Posterior cingulate gyrus (tissue), 11 donors: ENCODE measurements at regions of chr1 and their contacts with region 1.

Region 1: GRCh38 chr1:45011837-45012638 is at the start of gene UROD:
- DNase-seq: peak; percentile 87 to 99 (median 89)

Region 2: DNA sequence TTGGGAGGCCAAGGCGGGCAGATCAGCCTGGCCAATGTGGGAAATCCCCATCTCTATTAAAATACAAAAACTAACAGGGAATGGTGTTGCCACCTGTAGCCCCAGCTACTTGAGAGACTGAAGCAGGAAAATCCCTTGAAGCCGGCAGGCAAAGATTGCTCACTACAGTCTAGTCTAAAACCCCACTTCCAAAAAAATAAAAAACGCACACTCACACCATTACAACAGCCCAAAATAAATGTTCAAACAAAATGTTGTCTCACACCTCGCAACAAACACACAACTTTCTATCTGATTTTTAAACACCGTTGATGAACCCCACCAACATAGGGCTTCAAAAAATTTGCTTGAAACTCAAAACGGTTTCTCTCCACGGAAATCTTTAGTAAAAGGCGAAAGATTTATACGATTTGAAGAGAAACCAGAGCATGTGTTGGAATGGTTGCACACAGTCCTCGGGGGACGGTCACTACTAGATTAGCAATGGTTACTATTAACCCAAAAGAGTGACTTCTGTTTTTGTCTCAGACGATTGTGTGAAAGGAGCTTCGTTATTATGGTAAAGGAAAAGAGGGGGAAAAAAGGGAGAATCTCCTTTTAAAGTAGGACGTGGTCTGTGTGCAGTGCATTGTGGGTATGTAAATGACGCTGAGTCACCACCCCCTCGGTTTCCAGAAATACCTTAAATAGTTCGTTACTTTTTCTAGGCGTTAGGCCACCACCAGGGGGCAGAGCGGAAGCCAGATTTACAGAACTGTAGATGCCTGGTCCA is 281.1 kb before region 1 on chr1 and contains the start of gene RNU5D-1:
- intact Hi-C with region 1: loop called (anchors 5 kb)
- DNase-seq: peak; percentile 84 to 98 (median 94)

Region 3: GRCh38 chr1:44835738-44836675 is 176.0 kb before region 1 on chr1:
- intact Hi-C with region 1: loop called (anchors 5 kb)
- DNase-seq: peak; percentile 64 to 97 (median 86)

Region 4: DNA sequence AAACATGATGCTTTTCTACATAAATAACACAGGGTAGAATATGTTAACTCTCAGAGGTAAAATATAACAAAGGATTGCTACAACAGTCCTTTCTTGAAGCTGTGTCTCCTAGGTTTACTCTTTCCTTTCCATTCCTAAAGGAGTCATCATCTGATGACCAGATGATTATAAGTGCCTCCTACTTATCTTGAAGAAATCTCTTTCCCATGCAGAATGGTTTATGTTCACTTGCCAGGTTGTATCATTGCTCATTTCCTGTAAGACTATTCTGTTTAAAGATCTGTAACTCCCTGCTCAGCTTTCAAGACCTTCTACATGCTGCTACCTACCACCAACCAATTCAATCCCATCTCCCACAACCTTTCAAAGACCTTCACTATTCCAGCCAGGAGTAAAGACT is 117.4 kb before region 1 on chr1:
- intact Hi-C with region 1: no loop called
- DNase-seq: no peak

Region 5: DNA sequence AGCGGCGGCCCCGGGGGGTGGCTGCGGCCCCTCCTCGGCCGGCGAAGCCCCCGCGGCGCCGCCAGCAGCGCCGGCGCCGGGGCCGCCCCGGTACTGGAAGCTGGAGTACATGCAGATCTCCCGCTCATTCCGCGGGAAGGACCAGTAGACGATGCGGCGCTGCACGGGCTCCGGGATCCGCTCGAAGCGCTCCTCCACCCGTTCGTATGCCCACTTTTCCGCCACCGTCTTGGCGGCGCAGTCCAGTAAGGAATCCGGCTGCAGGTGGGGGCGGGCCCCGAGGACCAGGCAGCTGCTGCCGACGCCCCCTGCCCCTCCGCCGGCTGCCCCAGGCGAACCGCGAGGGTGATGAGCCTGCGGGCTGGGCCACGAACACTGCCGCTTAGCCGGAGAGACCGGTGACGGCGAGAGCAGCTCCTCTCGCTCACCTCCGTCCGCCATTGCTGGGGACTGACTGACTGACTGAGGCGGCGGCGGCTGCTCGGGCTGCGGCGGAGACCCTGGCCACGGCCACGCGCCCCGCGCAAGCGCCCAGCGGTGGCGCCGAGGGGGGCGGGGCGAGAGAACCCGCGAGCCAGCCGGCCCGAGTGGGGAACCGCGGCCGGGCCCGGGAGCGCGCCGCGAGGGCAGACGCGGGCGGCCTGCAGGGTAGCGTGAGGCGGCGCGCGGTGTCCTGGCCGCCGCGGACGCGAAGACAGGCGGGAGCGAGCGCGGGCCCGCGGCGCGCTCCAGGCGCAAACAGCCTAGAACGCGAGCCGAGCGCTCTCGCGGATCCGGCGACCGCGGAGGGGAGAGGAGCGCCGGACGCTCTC is 194.1 kb after region 1 on chr1 and contains the start of gene ZSWIM5:
- intact Hi-C with region 1: loop called (anchors 2 kb)
- DNase-seq: peak; percentile 60 to 96 (median 72)

Region 6: DNA sequence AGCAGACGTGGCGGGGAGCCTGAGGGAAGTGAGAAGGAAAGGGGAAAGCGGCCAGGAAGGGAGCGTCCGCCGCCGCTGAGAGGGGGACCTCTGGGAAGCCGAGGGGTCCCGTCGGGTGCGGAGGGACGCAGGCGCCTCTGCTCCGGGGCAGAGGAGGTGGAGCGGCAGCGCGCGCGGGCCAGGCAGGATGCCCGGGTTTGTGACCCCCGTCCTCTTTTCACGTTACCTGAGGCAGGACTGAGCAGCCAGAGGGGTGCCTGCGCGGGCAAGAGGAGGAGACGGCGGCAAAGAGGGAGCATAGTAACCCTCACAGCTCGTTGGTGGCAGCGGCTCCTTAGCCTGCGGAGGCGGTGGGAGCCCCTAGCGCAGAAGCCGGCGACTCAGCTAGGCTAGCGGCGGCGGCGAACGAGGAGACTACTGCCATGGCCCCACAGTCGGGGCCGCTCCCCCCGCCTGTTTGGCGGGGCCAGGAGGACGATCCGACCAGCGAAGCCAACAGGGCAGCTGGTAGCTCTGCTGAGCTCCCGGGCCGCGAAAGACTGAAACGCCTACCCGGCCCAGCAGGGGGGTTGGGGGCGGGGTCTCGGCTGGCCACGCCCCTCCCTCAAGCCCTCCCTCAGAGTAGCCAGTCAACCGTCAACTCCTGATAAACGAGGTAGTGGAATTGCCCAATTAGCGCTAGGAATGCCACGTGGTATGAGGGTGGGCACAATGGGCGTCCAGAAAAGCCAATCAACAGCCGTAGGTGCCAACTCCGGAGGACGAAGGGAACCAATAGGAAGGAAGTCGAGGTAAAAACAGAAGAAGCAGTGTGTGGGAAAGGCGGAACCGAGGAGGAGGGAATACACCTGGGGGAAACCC is 478.8 kb after region 1 on chr1 and contains the start of gene TESK2:
- intact Hi-C with region 1: loop called (anchors 2 kb)
- DNase-seq: peak; percentile 95 to 100 (median 98)